AG04449 (cell line): ENCODE measurements at regions of chr3 and their contacts with region 1.

Region 1: DNA sequence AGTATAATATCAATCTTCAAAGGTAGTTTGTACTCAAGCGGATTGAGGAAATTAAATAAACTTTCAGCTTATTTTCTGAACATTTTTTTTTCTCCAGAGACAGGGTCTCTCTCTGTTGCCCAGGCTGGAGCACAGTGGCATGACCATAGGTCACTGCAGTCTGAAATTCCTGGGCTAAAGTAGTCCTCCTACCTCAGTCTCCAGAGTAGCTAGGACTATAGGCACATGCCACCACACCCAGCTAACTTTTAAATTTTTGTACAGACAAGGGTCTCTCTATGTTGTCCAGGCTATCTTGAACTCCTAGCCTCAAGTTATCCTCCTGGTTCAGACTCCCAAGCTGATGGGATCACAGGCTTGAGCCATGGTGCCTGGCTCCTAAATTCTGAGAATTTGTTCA is 97.1 kb downstream of the FAIM start:
- DNase-seq: no peak
- H3K4me3 ChIP-seq: no peak overlapping the region
- CTCF ChIP-seq: no peak

Region 2: DNA sequence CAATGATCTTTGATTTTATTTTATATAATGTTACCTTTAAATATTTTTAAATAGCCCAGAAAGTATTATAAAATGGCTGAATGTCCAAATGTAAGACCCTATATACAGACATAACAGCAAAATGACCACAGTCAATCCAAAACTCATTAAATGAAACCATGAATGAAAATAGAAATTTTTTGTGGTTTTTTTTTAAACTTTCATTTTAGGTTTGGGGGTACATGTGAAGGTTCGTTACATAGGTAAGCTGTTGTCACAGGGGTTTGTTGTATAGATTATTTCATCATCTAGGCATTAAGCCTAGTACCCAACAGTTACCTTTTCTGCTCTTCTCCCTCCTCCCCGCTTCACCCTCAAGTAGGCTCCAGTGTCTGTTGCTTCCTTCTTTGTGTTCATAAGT is 11.7 kb after region 1 on chr3:
- CTCF ChIA-PET with region 1: interaction called, 12 read pairs
- POLR2A ChIA-PET with region 1: no interaction called
- DNase-seq: no peak
- H3K4me3 ChIP-seq: no peak overlapping the region
- CTCF ChIP-seq: no peak